PC-3 (cell line): ENCODE measurements at regions of chr12 and their contacts with region 1.

Region 1: GRCh38 chr12:104522985-104523722 is 66.4 kb downstream of the CHST11 start:
- DNase-seq: peak; percentile 23
- ATAC-seq: peak; percentile 34; the same call in 1 of the 2 replicates
- H3K4me3 ChIP-seq: no peak overlapping the region
- H3K27ac ChIP-seq: no peak overlapping the region
- H3K4me1 ChIP-seq: peaks cover 20% of the 10 kb centered on the region
- H3K27me3 ChIP-seq: no peaks in the 10 kb centered on the region
- CTCF ChIP-seq: no peak

Region 2: GRCh38 chr12:105024928-105025327 is 501.8 kb after region 1 on chr12:
- CTCF ChIA-PET with region 1: no interaction called
- POLR2A ChIA-PET with region 1: interaction called, 11 read pairs
- intact Hi-C with region 1: no loop called
- DNase-seq: no peak
- ATAC-seq: no peak
- H3K4me3 ChIP-seq: no peak overlapping the region
- H3K27ac ChIP-seq: no peak overlapping the region
- H3K4me1 ChIP-seq: peaks cover 8% of the 10 kb centered on the region
- H3K27me3 ChIP-seq: no peaks in the 10 kb centered on the region
- CTCF ChIP-seq: no peak